Psoas muscle (tissue), 8 donors: ENCODE measurements at regions of chr3 and their contacts with region 1.

Region 1: GRCh38 chr3:50611464-50612233 is at the start of gene CISH:
- DNase-seq: peak; percentile 98
- ATAC-seq: peak; percentile 77 to 82 (median 80)
- H3K4me3 ChIP-seq: peak within 1 kb of the TSS; percentile 89
- H3K27ac ChIP-seq: peak within 1 kb of the TSS; percentile 91
- H3K4me1 ChIP-seq: peaks cover 52% of the 10 kb centered on the region
- H3K27me3 ChIP-seq: no peaks in the 10 kb centered on the region
- CTCF ChIP-seq: peak; percentile 27
- total RNA-seq, gene CISH: 16.9 to 75.1 (median 50.4) TPM

Region 2: GRCh38 chr3:50126287-50127211 is 485.1 kb before region 1 on chr3:
- intact Hi-C with region 1: no loop called
- DNase-seq: peak in 1 of 2 donors; percentile 49
- ATAC-seq: no peak
- H3K4me3 ChIP-seq: no peak overlapping the region
- H3K27ac ChIP-seq: no peak overlapping the region
- H3K4me1 ChIP-seq: peaks cover 4% of the 10 kb centered on the region
- H3K27me3 ChIP-seq: no peaks in the 10 kb centered on the region
- CTCF ChIP-seq: no peak

Region 3: GRCh38 chr3:50519471-50520089 is 92.1 kb before region 1 on chr3:
- intact Hi-C with region 1: loop called (anchors 2 to 5 kb)
- DNase-seq: peak; percentile 60 to 73
- ATAC-seq: peak; percentile 73 to 85 (median 82)
- H3K4me3 ChIP-seq: no peak overlapping the region
- H3K27ac ChIP-seq: no peak overlapping the region
- H3K4me1 ChIP-seq: no peaks in the 10 kb centered on the region
- H3K27me3 ChIP-seq: no peaks in the 10 kb centered on the region
- CTCF ChIP-seq: peak; percentile 86

Region 4: GRCh38 chr3:50652709-50653108 is 41.1 kb after region 1 on chr3:
- intact Hi-C with region 1: loop called (anchors 1 to 2 kb)
- DNase-seq: peak; percentile 47 to 80
- ATAC-seq: peak; percentile 60 to 71 (median 66)
- H3K4me3 ChIP-seq: no peak overlapping the region
- H3K27ac ChIP-seq: no peak overlapping the region
- H3K4me1 ChIP-seq: peaks cover 30% of the 10 kb centered on the region
- H3K27me3 ChIP-seq: no peaks in the 10 kb centered on the region
- CTCF ChIP-seq: peak; percentile 54

Region 5: GRCh38 chr3:50873376-50874157 is 261.9 kb after region 1 on chr3:
- intact Hi-C with region 1: no loop called
- DNase-seq: no peak
- ATAC-seq: no peak
- H3K4me3 ChIP-seq: no peak overlapping the region
- H3K27ac ChIP-seq: no peak overlapping the region
- H3K4me1 ChIP-seq: no peaks in the 10 kb centered on the region
- H3K27me3 ChIP-seq: no peaks in the 10 kb centered on the region
- CTCF ChIP-seq: no peak

Region 6: DNA sequence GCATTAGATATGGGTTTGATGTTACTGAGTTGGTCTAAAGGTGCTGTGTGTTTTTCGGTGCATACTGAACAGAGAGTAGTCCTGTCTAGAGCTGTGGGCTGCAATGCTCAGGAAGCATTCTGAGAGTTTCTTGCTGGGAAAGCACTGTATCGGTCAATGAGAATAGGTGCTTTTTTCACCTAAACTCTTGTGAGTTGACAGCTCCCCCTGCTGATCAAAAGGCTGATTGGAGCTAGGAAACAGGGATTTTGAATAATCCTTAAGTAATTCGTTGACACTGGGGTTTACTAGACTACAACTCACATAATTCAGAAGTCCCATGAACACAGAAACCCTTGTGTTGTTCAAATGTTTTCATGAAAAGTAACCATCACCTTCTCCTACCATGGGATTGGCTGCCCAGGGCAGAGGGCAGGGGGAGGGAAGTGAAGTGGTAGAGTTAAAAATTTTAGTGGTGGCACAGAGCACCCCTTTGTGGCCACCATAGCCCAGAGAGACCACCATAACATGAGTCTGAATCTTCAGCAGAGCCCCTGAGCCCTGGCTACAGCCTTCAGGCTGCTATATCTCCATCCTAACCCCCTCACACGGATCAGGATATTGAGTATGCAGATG is 760.4 kb after region 1 on chr3:
- intact Hi-C with region 1: loop called in 1 of 2 experiments (anchors 2 kb)
- DNase-seq: no peak
- ATAC-seq: peak in 1 of 4 donors; percentile 64
- H3K4me3 ChIP-seq: no peak overlapping the region
- H3K27ac ChIP-seq: no peak overlapping the region
- H3K4me1 ChIP-seq: peaks cover 8% of the 10 kb centered on the region
- H3K27me3 ChIP-seq: no peaks in the 10 kb centered on the region
- CTCF ChIP-seq: peak; percentile 56

Region 7: DNA sequence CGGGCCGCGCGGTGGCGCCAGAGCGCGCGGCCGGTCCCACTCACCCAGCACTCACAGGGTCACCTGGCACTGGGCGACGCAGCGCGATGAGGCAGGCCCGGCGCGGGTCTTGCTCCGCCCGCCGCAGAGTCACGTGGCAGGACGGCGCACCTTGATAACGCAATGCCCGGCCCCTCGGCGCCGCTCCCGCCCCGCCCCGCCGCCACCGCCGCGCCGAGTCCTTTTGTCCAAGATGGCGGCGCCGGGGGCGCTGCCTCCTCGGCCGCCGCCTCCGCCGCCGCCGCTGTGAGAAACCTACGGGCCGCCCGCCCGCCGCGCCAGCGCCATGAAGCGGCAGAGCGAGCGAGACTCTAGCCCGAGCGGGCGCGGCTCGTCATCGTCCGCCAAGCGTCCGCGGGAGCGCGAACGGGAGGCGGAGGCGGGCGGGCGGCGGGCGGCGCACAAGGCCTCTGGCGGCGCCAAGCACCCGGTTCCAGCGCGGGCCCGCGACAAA is 779.5 kb after region 1 on chr3 and contains the start of gene RBM15B:
- intact Hi-C with region 1: loop called (anchors 5 to 10 kb)
- DNase-seq: peak; percentile 99
- ATAC-seq: peak; percentile 94 to 96 (median 96)
- H3K4me3 ChIP-seq: peak within 1 kb of the TSS; percentile 88
- H3K27ac ChIP-seq: peak within 1 kb of the TSS; percentile 90
- H3K4me1 ChIP-seq: peaks cover 50% of the 10 kb centered on the region
- H3K27me3 ChIP-seq: no peaks in the 10 kb centered on the region
- CTCF ChIP-seq: peak; percentile 94
- total RNA-seq, gene RBM15B: 7.0 to 11.9 (median 9.8) TPM

Region 8: DNA sequence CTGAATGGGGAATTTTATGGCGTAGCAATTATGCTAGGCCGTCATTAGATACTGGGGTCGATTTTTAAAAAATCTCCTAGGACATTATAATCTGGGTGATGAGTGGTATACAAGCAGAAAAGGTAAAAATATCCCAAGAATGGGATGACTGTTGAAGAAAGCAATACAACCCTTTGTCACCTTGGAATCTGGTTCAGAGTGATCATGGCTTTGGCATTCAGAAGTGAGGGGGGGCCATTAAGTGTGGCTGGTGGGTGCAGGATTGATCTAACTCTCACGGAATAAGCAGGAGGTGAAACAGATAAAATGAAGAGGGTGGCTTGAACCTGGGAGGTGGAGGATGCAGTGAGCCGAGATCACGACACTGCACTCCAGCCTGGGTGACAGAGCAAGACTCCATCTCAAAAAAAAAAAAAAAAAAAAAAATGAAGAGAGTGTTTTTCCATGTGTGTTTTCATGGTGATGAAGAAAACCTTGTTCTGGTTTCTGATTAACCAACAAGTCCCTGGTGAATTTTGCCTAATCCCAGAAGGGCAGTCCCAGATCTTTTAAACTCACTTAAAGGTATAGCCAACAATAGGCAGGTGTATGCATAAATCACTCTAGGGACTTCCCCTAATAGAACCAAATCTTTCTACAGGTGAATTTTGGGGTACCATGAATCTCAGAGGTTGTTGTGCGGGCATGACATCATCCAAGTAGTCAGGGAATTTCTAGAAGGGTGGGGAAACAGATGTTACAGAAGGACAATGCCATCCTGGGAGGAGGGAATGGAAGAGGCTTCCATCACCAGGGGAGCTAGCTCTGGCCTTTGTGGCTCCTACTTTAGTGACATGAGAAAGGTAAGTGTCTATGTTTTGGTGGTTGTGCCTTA is 923.7 kb after region 1 on chr3:
- intact Hi-C with region 1: no loop called
- DNase-seq: no peak
- ATAC-seq: no peak
- H3K4me3 ChIP-seq: no peak overlapping the region
- H3K27ac ChIP-seq: no peak overlapping the region
- H3K4me1 ChIP-seq: peaks cover 14% of the 10 kb centered on the region
- H3K27me3 ChIP-seq: no peaks in the 10 kb centered on the region
- CTCF ChIP-seq: no peak